WTC11 (cell line): ENCODE measurements at regions of chr19 and their contacts with region 1.

Region 1: DNA sequence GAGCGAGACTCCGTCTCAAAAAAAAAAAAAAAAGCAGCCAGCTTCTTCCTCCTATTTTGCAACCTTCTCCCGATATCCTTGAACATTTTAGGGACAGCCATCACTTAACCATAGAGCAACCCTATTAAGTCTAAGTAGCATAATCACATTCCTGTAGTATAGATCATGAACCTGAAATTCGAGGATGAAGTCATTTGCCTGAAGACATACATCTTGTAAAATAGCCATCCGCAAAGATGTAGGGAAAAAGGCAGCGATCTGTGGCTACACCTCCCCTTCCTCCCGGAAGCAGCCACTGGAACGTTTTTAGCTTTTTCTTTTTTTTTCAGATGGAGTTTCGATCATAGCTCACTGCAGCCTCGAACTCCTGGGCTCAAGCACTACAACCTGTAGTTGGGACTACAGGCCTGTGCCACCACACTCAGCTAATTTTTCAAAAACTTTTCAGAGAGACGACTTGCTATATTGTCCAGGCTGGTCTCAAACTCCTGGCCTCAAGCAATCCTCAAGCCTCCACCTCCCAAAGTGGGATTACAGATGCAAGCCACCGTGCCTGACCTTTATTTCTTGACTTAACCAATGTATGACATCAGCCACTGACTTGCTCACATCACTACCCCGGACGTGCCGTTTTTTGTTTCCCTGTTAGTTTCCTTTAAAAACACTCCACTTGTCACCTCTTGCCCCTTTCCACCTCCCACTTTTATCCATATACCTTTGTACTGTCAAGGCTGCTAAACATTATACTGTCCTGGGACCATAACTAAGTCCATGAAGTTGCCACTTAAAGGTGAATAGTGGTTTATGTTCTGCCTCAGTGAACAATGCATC is 2.0 kb upstream of the EPHX3 start:
- DNase-seq: no peak
- ATAC-seq: no peak
- H3K4me3 Mint-ChIP-seq: peak overlapping the region; percentile 63
- H3K27ac Mint-ChIP-seq: peak overlapping the region; percentile 82
- H3K4me1 Mint-ChIP-seq: peaks cover 8% of the 10 kb centered on the region; the same call in 1 of the 2 replicates
- H3K27me3 Mint-ChIP-seq: no peaks in the 10 kb centered on the region
- CTCF ChIP-seq: no peak

Region 2: GRCh38 chr19:15154002-15154612 is 80.2 kb before region 1 on chr19:
- CTCF ChIA-PET with region 1: interaction called, 22 read pairs
- POLR2A ChIA-PET with region 1: no interaction called
- DNase-seq: peak; percentile 82
- ATAC-seq: peak; percentile 75
- H3K4me3 Mint-ChIP-seq: no peak overlapping the region
- H3K27ac Mint-ChIP-seq: no peak overlapping the region
- H3K4me1 Mint-ChIP-seq: no peaks in the 10 kb centered on the region; the same call in 1 of the 2 replicates
- H3K27me3 Mint-ChIP-seq: peaks cover 3% of the 10 kb centered on the region; the same call in 1 of the 2 replicates
- CTCF ChIP-seq: peak; percentile 55

Region 3: GRCh38 chr19:15161028-15161989 is 72.9 kb before region 1 on chr19:
- CTCF ChIA-PET with region 1: interaction called, 17 read pairs
- POLR2A ChIA-PET with region 1: interaction called, 4 read pairs
- DNase-seq: peak; percentile 43
- ATAC-seq: peak; percentile 50
- H3K4me3 Mint-ChIP-seq: no peak overlapping the region
- H3K27ac Mint-ChIP-seq: no peak overlapping the region; the same call in 1 of the 2 replicates
- H3K4me1 Mint-ChIP-seq: no peaks in the 10 kb centered on the region
- H3K27me3 Mint-ChIP-seq: no peaks in the 10 kb centered on the region
- CTCF ChIP-seq: no peak

Region 4: GRCh38 chr19:15177269-15178116 is 56.8 kb before region 1 on chr19:
- CTCF ChIA-PET with region 1: interaction called, 37 read pairs
- POLR2A ChIA-PET with region 1: interaction called, 3 read pairs
- DNase-seq: peak; percentile 92
- ATAC-seq: peak; percentile 68
- H3K4me3 Mint-ChIP-seq: peak overlapping the region; percentile 44
- H3K27ac Mint-ChIP-seq: peak overlapping the region; percentile 10
- H3K4me1 Mint-ChIP-seq: peaks cover 13% of the 10 kb centered on the region
- H3K27me3 Mint-ChIP-seq: no peaks in the 10 kb centered on the region
- CTCF ChIP-seq: peak; percentile 93

Region 5: GRCh38 chr19:15195371-15196334 is 38.6 kb before region 1 on chr19:
- CTCF ChIA-PET with region 1: interaction called, 64 read pairs
- POLR2A ChIA-PET with region 1: interaction called, 19 read pairs
- DNase-seq: peak; percentile 97
- ATAC-seq: peak; percentile 58
- H3K4me3 Mint-ChIP-seq: peak overlapping the region; percentile 77
- H3K27ac Mint-ChIP-seq: 0 out of 2 replicates have a peak overlapping the region, but pooled peaks have one; percentile 70
- H3K4me1 Mint-ChIP-seq: peaks cover 31% of the 10 kb centered on the region
- H3K27me3 Mint-ChIP-seq: no peaks in the 10 kb centered on the region
- CTCF ChIP-seq: no peak

Region 6: DNA sequence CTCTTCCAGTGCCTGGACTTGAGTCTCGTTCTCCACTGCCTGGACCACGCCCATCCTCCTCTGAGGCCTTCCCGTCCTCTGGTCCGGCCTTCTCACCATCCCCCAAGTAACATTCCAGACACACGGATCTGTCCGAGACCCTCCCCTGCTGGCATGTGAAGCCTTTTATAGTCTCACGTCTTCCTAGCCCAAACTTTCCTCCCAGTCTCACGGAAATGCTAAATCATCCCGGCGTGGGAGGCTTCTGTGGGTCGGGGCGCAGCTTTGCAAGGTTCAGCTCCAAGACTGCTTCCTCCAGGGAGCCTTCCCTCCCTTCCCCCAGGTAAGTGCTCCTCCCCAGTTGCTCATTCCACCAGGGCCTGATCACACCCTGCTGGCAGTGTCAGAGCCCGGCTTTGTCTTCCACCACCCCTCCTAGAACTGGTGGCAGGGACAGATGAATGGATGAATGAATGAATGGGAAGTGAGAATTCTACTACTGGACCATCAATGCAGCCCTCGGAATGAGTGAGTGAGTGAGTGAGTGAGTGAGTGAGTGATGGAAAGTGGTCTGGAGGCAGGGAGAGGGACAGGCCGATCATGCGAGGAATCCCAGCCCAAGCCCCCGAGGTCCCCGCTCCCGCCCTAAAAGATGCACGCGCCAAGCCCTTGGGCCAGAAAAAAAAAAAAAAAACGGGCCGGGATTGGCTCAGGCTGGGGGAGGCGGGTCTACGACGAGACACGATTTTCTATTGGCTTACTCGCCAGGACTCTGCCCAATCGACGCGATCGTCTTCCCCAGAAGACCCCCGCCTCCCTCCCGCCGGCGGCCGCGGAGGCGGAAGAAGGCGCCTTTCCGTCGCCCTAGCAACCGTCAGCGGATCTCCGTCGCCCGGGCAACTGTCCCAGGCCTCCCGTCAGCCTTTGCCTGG is 11.3 kb before region 1 on chr19:
- CTCF ChIA-PET with region 1: interaction called, 12 read pairs
- POLR2A ChIA-PET with region 1: interaction called, 4 read pairs
- DNase-seq: peak; percentile 96
- ATAC-seq: peak; percentile 90
- H3K4me3 Mint-ChIP-seq: peak overlapping the region; percentile 74
- H3K27ac Mint-ChIP-seq: peak overlapping the region; percentile 92
- H3K4me1 Mint-ChIP-seq: peaks cover 11% of the 10 kb centered on the region
- H3K27me3 Mint-ChIP-seq: peaks cover 4% of the 10 kb centered on the region; the same call in 1 of the 2 replicates
- CTCF ChIP-seq: no peak

Region 7: GRCh38 chr19:15318241-15318691 is 84.0 kb after region 1 on chr19:
- CTCF ChIA-PET with region 1: no interaction called
- POLR2A ChIA-PET with region 1: no interaction called
- DNase-seq: no peak
- ATAC-seq: no peak
- H3K4me3 Mint-ChIP-seq: no peak overlapping the region
- H3K27ac Mint-ChIP-seq: peak overlapping the region; percentile 23; the same call in 1 of the 2 replicates
- H3K4me1 Mint-ChIP-seq: peaks cover 68% of the 10 kb centered on the region
- H3K27me3 Mint-ChIP-seq: no peaks in the 10 kb centered on the region
- CTCF ChIP-seq: no peak

Region 8: DNA sequence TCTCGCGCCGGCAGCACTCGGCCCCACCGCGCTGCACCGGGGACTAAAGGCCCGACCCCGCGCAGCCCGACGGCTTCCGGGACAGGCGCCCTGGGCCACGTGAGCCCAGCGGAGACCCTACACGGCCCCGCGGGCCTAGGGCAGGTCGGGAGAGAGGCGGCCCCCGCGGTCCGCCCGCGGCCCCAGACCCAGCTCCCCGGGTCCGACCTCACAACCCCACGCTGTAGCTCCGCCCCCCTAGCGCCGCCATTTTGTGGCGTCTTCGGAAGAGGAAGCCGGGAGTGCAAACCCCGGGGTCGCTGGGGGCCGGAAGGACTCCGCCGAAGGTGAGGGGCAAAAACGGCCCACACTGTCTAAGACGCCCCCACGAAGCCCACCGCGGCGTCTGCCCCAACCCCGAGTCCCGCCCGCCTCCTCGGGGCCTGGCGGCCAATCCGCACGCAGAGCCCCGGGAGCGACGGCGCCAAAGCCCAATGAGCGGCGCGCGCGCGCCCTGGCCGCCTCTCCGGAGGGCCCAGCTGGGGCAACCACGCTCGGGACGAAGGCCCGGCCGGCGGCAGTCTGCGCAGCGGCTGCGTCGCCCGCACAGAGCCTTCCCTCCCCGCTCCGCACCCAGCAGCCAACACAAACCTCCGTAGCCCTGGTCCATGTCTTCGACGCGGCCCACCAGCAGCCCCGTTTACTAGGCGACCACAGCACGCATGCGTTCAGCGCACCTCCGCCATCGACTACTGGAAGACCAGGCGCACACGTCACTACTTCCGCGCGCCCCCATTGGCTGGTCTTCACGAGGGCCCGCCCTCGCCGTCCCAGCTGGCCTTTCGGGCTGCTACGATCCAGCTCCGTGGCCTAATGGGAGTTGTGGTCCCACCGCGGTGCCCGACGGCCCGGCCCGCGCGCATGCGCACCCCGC is 145.1 kb after region 1 on chr19 and contains the start of gene AKAP8:
- CTCF ChIA-PET with region 1: interaction called, 12 read pairs
- POLR2A ChIA-PET with region 1: interaction called, 13 read pairs
- DNase-seq: peak; percentile 98
- ATAC-seq: peak; percentile 89
- H3K4me3 Mint-ChIP-seq: peak within 1 kb of the TSS; percentile 99
- H3K27ac Mint-ChIP-seq: peak within 1 kb of the TSS; percentile 98
- H3K4me1 Mint-ChIP-seq: peaks cover 29% of the 10 kb centered on the region
- H3K27me3 Mint-ChIP-seq: no peaks in the 10 kb centered on the region
- CTCF ChIP-seq: no peak
- total RNA-seq, gene AKAP8: 49.1 to 65.9 TPM (median 51.3 TPM) in 3 replicates